CD4-positive, alpha-beta memory T cell (primary cell): ENCODE measurements at regions of chr14 and their contacts with region 1.

Region 1: GRCh38 chr14:92603309-92604242 is 90.0 kb downstream of the RIN3 start:
- DNase-seq: peak in 4 of 5 donors; percentile 58 to 67 (median 61)
- H3K4me3 ChIP-seq: no peak overlapping the region
- H3K4me3 Mint-ChIP-seq: peak overlapping the region in 2 of 8 donors; percentile 34 to 50
- H3K27ac ChIP-seq: no peak overlapping the region
- H3K27ac Mint-ChIP-seq: peak overlapping the region in 5 of 7 donors; percentile 24 to 52 (median 43)
- H3K4me1 ChIP-seq: peaks cover 12% of the 10 kb centered on the region
- H3K4me1 Mint-ChIP-seq: peaks cover 11 to 16% (median 14%) of the 10 kb centered on the region in 4 donors
- H3K27me3 ChIP-seq: no peaks in the 10 kb centered on the region
- H3K27me3 Mint-ChIP-seq: peaks cover 0 to 2% of the 10 kb centered on the region in 2 donors

Region 2: DNA sequence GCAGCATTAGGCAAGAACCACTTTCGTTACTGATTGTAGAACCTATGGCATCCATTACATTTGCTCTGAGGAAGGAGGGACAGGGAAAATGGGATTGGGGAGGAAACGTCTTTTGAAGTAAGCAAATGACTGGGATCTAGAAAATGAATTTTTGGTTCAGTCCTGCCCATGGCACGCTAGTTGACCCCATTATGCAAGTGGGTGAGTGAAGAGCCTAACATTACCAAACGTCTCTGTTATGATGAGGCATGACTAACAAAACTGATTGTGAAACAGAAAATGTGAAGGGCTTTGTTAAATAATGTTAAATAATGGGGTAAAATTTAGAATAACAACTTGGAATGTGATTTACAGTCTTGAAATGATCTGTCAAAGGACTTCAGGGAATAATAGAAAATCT is 443.0 kb before region 1 on chr14:
- CTCF ChIA-PET with region 1: no interaction called
- POLR2A ChIA-PET with region 1: no interaction called
- intact Hi-C with region 1: loop called (anchors 10 kb)
- DNase-seq: no peak
- H3K4me3 ChIP-seq: no peak overlapping the region
- H3K4me3 Mint-ChIP-seq: no peak overlapping the region
- H3K27ac ChIP-seq: no peak overlapping the region
- H3K27ac Mint-ChIP-seq: peak overlapping the region in 1 of 7 donors; percentile 39
- H3K4me1 ChIP-seq: no peaks in the 10 kb centered on the region
- H3K4me1 Mint-ChIP-seq: peaks cover 0 to 4% (median 1%) of the 10 kb centered on the region in 4 donors
- H3K27me3 ChIP-seq: no peaks in the 10 kb centered on the region
- H3K27me3 Mint-ChIP-seq: no peaks in the 10 kb centered on the region